Calu3 (cell line): ENCODE measurements at regions of chr11 and their contacts with region 1.

Region 1: GRCh38 chr11:124758317-124759203 is 3.5 kb downstream of the ESAM start:
- DNase-seq: peak; percentile 83
- H3K4me3 Mint-ChIP-seq: peak overlapping the region; percentile 73
- H3K27ac Mint-ChIP-seq: no peak overlapping the region
- H3K4me1 Mint-ChIP-seq: peaks cover 15% of the 10 kb centered on the region
- H3K27me3 Mint-ChIP-seq: no peaks in the 10 kb centered on the region
- CTCF ChIP-seq: peak; percentile 72

Region 2: GRCh38 chr11:124662106-124662505 is 96.5 kb before region 1 on chr11:
- CTCF ChIA-PET with region 1: no interaction called
- intact Hi-C with region 1: no loop called
- DNase-seq: no peak
- H3K4me3 Mint-ChIP-seq: no peak overlapping the region
- H3K27ac Mint-ChIP-seq: no peak overlapping the region
- H3K4me1 Mint-ChIP-seq: no peaks in the 10 kb centered on the region
- H3K27me3 Mint-ChIP-seq: no peaks in the 10 kb centered on the region
- CTCF ChIP-seq: no peak

Region 3: GRCh38 chr11:124746621-124747243 is 11.8 kb before region 1 on chr11:
- CTCF ChIA-PET with region 1: interaction called, 13 read pairs
- intact Hi-C with region 1: loop called (anchors 2 kb)
- DNase-seq: peak; percentile 74
- H3K4me3 Mint-ChIP-seq: peak overlapping the region; percentile 87
- H3K27ac Mint-ChIP-seq: peak overlapping the region; percentile 70
- H3K4me1 Mint-ChIP-seq: peaks cover 16% of the 10 kb centered on the region
- H3K27me3 Mint-ChIP-seq: no peaks in the 10 kb centered on the region
- CTCF ChIP-seq: peak; percentile 34

Region 4: DNA sequence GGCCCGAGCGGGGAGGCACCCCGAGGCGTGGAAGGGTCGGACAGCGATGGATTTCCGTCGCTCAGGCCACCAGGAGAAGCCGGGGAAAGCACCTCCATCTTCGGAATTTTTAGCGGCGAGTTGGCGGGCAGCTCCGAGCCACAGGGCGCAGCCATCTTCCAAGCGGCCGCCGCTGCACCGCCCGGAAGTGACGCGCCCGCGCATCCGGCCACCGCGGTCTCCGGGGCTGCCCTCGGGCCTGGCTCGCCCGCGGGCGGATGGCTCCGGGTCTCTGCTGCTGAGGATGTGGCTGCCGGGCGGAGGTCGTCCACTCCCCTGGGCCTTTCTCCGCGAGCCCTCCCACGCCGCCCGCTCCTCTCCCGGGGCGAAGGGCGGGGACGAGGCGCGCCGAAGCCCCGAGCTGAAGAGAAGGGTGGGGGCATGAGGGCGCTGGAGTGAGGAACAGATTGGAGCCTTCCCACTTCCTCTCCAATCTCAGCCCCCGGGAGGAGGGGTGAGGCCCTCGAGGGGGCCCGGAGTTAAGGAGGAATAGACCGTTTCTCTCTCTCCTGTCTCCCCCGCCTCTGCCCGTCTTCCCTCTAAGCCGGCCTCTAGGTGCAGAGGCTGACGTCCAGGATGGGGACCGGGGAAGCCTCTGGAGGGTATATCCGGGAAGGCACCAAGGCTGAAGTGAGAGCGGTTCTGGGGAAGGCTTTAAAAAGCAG is 41.8 kb after region 1 on chr11 and contains the start of gene MSANTD2:
- CTCF ChIA-PET with region 1: interaction called, 5 read pairs
- intact Hi-C with region 1: loop called (anchors 5 kb)
- DNase-seq: peak; percentile 78
- H3K4me3 Mint-ChIP-seq: peak within 1 kb of the TSS; percentile 99
- H3K27ac Mint-ChIP-seq: peak within 1 kb of the TSS; percentile 78
- H3K4me1 Mint-ChIP-seq: no peaks in the 10 kb centered on the region
- H3K27me3 Mint-ChIP-seq: no peaks in the 10 kb centered on the region
- CTCF ChIP-seq: no peak
- total RNA-seq, gene MSANTD2: 12.6 and 13.0 TPM in 2 replicates